ENCODE measurements at regions of chr1 and their contacts with region 1.

Region 1: GRCh38 chr1:77759071-77760028 is at the start of gene USP33:
- DNase-seq: peak; percentile 81 to 96 (median 89)
- ATAC-seq: peak; percentile 95
- H3K4me3 ChIP-seq: peak within 1 kb of the TSS; percentile 79 to 98
- H3K4me3 Mint-ChIP-seq: peak within 1 kb of the TSS; percentile 90
- H3K27ac ChIP-seq: peak within 1 kb of the TSS; percentile 70 to 88
- H3K27ac Mint-ChIP-seq: peak within 1 kb of the TSS; percentile 90
- H3K4me1 ChIP-seq: peaks cover 44% of the 10 kb centered on the region
- H3K4me1 Mint-ChIP-seq: peaks cover 45% of the 10 kb centered on the region
- H3K27me3 ChIP-seq: no peaks in the 10 kb centered on the region
- H3K27me3 Mint-ChIP-seq: no peaks in the 10 kb centered on the region
- CTCF ChIP-seq: no peak
- total RNA-seq, gene USP33: 72.1 to 72.2 TPM

Region 2: DNA sequence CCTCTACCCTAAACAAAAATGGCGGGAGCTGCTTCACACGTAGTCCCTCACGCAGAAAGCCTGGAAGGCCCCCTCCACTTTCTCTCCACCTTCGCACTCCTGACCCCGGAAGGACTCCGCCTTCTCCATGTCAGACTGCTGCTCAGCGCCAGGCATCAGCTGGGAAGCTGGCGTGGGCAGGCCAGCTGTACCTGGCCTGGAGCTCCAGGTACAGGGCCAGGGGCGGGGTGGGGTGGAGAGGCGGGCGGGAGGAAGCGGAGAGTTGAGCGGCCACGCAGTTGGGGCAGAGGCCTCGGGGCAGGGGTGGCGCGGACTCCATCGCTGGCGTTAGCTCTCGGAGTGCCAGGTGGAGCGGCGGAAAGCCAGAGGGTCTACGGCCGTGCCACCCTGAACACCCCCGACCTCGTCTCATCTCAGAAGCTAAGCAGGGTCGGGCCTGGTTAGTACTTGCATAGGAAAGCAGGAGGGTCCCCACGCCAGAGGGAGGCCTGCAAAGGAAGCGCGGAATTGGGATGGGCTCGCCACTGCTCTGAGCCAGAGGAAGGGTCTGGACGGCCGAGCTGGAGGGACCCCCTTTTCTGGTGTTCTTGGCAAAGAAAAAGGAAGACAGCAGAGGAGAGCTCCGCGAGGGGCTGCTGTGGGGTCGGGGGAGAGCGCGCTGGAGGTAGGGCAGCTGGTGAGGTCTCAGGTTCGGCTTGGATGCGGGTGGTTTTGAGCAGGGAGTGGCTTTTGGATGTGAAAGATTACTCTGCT is 20.4 kb after region 1 on chr1 and contains the start of gene MIGA1:
- CTCF ChIA-PET with region 1: interaction called, 3 read pairs
- POLR2A ChIA-PET with region 1: interaction called, 8 read pairs
- intact Hi-C with region 1: loop called (anchors 1 kb)
- DNase-seq: peak; percentile 73 to 96 (median 89)
- ATAC-seq: peak; percentile 97
- H3K4me3 ChIP-seq: peak within 1 kb of the TSS; percentile 86 to 90
- H3K4me3 Mint-ChIP-seq: peak within 1 kb of the TSS; percentile 97
- H3K27ac ChIP-seq: peak within 1 kb of the TSS; percentile 61 to 65
- H3K27ac Mint-ChIP-seq: peak within 1 kb of the TSS; percentile 90
- H3K4me1 ChIP-seq: peaks cover 28% of the 10 kb centered on the region
- H3K4me1 Mint-ChIP-seq: peaks cover 41% of the 10 kb centered on the region
- H3K27me3 ChIP-seq: no peaks in the 10 kb centered on the region
- H3K27me3 Mint-ChIP-seq: no peaks in the 10 kb centered on the region
- CTCF ChIP-seq: no peak
- total RNA-seq, gene MIGA1: 11.8 to 13.5 TPM

Region 3: DNA sequence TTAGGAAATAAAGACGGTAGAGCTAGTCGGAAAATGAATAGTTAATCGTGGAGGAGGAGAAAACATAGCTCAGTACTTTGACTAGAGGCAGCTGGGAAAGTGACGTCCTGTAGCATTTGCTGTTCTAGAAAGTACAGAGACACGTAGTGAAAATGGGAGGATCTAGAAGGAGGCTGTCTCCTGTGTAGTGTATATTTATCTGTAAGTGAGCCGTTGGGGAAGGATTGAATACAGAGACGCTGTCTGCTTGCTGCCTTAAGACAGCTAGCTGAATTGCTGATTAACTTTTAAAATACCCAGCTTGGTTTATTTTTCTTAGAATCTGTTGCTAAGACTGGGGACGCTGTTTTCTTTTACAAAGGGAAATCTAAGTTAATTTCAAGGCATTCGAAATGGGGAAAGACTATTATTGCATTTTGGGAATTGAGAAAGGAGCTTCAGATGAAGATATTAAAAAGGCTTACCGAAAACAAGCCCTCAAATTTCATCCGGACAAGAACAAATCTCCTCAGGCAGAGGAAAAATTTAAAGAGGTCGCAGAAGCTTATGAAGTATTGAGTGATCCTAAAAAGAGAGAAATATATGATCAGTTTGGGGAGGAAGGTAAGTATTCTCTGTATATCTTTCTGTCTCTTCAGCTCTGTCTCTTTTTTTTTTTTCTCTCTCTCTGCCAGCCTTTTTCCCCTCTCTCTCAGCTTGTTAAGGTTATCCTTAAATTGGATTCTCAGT is 245.5 kb after region 1 on chr1 and contains the start of gene DNAJB4:
- CTCF ChIA-PET with region 1: no interaction called
- POLR2A ChIA-PET with region 1: no interaction called
- intact Hi-C with region 1: loop called in 1 of 2 experiments (anchors 1 kb)
- DNase-seq: peak; percentile 20 to 94 (median 60)
- ATAC-seq: peak; percentile 98
- H3K4me3 ChIP-seq: peak within 1 kb of the TSS; percentile 53 to 71
- H3K4me3 Mint-ChIP-seq: peak within 1 kb of the TSS; percentile 93
- H3K27ac ChIP-seq: peak within 1 kb of the TSS; percentile 96 to 98
- H3K27ac Mint-ChIP-seq: peak within 1 kb of the TSS; percentile 99
- H3K4me1 ChIP-seq: peaks cover 16% of the 10 kb centered on the region
- H3K4me1 Mint-ChIP-seq: peaks cover 49% of the 10 kb centered on the region
- H3K27me3 ChIP-seq: no peaks in the 10 kb centered on the region
- H3K27me3 Mint-ChIP-seq: no peaks in the 10 kb centered on the region
- CTCF ChIP-seq: no peak
- total RNA-seq, gene DNAJB4: 13.3 to 13.4 TPM